MCF 10A (cell line): ENCODE measurements at regions of chr6 and their contacts with region 1.

Region 1: DNA sequence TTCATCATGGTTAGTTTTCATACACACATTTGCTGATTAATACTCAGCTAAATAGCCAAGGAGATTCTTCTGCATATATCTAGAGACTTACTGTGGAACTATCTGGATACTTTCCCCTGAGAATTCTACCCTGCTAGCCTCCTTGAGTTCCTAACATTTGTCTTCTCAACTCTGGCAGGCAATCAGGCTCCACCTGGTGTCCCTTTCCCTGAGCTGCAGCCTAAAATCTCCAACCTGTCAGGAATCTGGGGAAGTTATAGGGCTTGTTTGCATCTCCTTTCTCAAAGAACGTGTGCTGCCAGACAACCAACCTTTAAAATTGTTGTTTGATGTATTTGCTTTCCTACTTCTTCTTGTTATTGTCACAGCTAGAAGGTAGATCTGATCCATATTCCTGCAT is 73.4 kb downstream of the FUT9 start:
- DNase-seq: peak; percentile 29
- H3K4me3 Mint-ChIP-seq: no peak overlapping the region
- H3K27ac Mint-ChIP-seq: no peak overlapping the region
- H3K4me1 Mint-ChIP-seq: no peaks in the 10 kb centered on the region
- H3K27me3 Mint-ChIP-seq: peaks cover 32% of the 10 kb centered on the region
- CTCF ChIP-seq: peak; percentile 45

Region 2: DNA sequence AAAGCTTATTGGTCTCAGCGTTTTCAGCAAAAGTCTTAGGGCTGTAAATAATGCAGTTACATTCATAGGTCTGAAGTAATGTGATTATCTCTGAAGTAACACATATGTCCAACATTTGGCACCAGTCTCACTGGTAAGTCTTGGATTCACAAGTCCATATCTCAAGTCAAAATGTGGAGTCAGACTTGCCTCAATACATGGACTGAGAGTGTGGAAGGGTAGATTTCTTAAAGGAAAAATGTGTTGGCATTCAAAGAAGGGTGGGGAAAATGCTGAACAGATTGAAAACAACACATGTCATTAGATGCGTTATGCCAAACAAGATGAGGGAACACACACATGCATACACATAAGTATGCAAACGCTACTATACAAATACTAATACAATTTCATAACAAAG is 1500.9 kb before region 1 on chr6:
- CTCF ChIA-PET with region 1: no interaction called
- POLR2A ChIA-PET with region 1: no interaction called
- intact Hi-C with region 1: no loop called
- DNase-seq: no peak
- H3K4me3 Mint-ChIP-seq: no peak overlapping the region
- H3K27ac Mint-ChIP-seq: no peak overlapping the region
- H3K4me1 Mint-ChIP-seq: no peaks in the 10 kb centered on the region
- H3K27me3 Mint-ChIP-seq: peaks cover 60% of the 10 kb centered on the region
- CTCF ChIP-seq: no peak

Region 3: GRCh38 chr6:95383878-95384277 is 705.3 kb before region 1 on chr6:
- CTCF ChIA-PET with region 1: no interaction called
- POLR2A ChIA-PET with region 1: no interaction called
- intact Hi-C with region 1: loop called (anchors 10 kb)
- DNase-seq: no peak
- H3K4me3 Mint-ChIP-seq: no peak overlapping the region
- H3K27ac Mint-ChIP-seq: no peak overlapping the region
- H3K4me1 Mint-ChIP-seq: no peaks in the 10 kb centered on the region
- H3K27me3 Mint-ChIP-seq: peaks cover 10% of the 10 kb centered on the region
- CTCF ChIP-seq: no peak

Region 4: GRCh38 chr6:95935736-95936135 is 153.4 kb before region 1 on chr6:
- CTCF ChIA-PET with region 1: no interaction called
- POLR2A ChIA-PET with region 1: no interaction called
- intact Hi-C with region 1: loop called (anchors 10 kb)
- DNase-seq: no peak
- H3K4me3 Mint-ChIP-seq: no peak overlapping the region
- H3K27ac Mint-ChIP-seq: no peak overlapping the region
- H3K4me1 Mint-ChIP-seq: no peaks in the 10 kb centered on the region
- H3K27me3 Mint-ChIP-seq: peaks cover 20% of the 10 kb centered on the region
- CTCF ChIP-seq: no peak

Region 5: GRCh38 chr6:95978230-95978629 is 110.9 kb before region 1 on chr6:
- CTCF ChIA-PET with region 1: no interaction called
- POLR2A ChIA-PET with region 1: no interaction called
- intact Hi-C with region 1: no loop called
- DNase-seq: no peak
- H3K4me3 Mint-ChIP-seq: no peak overlapping the region
- H3K27ac Mint-ChIP-seq: no peak overlapping the region
- H3K4me1 Mint-ChIP-seq: no peaks in the 10 kb centered on the region
- H3K27me3 Mint-ChIP-seq: no peaks in the 10 kb centered on the region
- CTCF ChIP-seq: no peak

Region 6: GRCh38 chr6:96381232-96381631 is 292.1 kb after region 1 on chr6:
- CTCF ChIA-PET with region 1: no interaction called
- POLR2A ChIA-PET with region 1: no interaction called
- intact Hi-C with region 1: no loop called
- DNase-seq: no peak
- H3K4me3 Mint-ChIP-seq: no peak overlapping the region
- H3K27ac Mint-ChIP-seq: no peak overlapping the region
- H3K4me1 Mint-ChIP-seq: no peaks in the 10 kb centered on the region
- H3K27me3 Mint-ChIP-seq: peaks cover 11% of the 10 kb centered on the region
- CTCF ChIP-seq: no peak

Region 7: GRCh38 chr6:96611342-96611991 is 522.3 kb after region 1 on chr6:
- CTCF ChIA-PET with region 1: no interaction called
- POLR2A ChIA-PET with region 1: no interaction called
- intact Hi-C with region 1: no loop called
- DNase-seq: no peak
- H3K4me3 Mint-ChIP-seq: no peak overlapping the region
- H3K27ac Mint-ChIP-seq: no peak overlapping the region
- H3K4me1 Mint-ChIP-seq: no peaks in the 10 kb centered on the region
- H3K27me3 Mint-ChIP-seq: peaks cover 83% of the 10 kb centered on the region
- CTCF ChIP-seq: no peak